ENCODE measurements at regions of chr16 and their contacts with region 1.

Region 1: GRCh38 chr16:55760310-55761001 is 72.4 kb downstream of the CES1 start:
- DNase-seq: peak in 2 of 6 donors; percentile 13 to 17
- ATAC-seq: peak in 2 of 4 donors; percentile 80 to 83
- H3K4me3 ChIP-seq: no peak overlapping the region
- H3K27ac ChIP-seq: no peak overlapping the region
- H3K4me1 ChIP-seq: no peaks in the 10 kb centered on the region
- H3K27me3 ChIP-seq: no peaks in the 10 kb centered on the region
- CTCF ChIP-seq: no peak

Region 2: DNA sequence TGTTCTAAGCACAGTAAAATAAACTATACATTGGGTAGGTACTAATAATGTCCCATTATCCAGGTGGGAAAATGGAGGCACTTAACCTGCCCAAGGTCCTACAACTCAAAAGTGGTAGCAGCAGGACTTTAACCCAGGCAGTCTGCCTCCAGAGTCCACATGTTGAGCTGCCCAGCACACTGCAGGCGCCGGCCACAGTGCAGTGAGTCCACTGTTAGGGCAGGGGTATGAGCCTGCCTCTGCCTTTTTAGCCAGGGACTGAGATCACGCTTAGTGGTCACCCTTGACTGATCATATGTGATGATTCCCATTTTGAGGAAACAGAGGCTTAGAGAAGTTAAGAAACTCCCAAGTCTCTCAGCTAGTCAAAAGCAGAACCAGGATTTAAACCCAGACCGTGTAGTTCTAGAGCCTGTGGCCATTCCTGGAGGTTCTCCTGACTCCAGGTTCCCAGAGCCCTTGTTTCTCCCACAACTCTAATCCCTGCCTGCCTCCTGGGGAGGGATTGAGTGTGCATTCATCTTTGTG is 64.1 kb after region 1 on chr16:
- intact Hi-C with region 1: loop called in 2 of 3 experiments (anchors 2 to 10 kb)
- DNase-seq: no peak
- ATAC-seq: no peak
- H3K4me3 ChIP-seq: no peak overlapping the region
- H3K27ac ChIP-seq: no peak overlapping the region
- H3K4me1 ChIP-seq: no peaks in the 10 kb centered on the region
- H3K27me3 ChIP-seq: no peaks in the 10 kb centered on the region
- CTCF ChIP-seq: no peak

Region 3: DNA sequence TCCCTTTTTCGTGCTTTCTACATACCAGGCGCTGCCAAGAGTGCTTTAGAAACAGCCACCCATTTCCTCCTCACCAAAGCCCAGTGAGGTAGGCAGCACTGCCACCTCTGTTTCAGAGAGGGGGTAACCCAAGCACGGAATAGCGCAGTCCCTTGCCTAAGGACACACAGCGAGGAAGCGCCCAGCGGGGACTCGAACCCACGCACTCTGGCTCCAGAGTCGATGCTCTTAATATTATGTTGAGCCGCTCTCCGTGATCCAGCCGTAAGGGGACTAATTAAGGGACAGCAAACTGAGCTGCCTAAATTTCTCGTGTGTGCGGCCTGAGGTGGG is 71.9 kb after region 1 on chr16:
- intact Hi-C with region 1: loop called in 2 of 3 experiments (anchors 2 to 10 kb)
- DNase-seq: no peak
- ATAC-seq: peak in 1 of 4 donors; percentile 19
- H3K4me3 ChIP-seq: no peak overlapping the region
- H3K27ac ChIP-seq: no peak overlapping the region
- H3K4me1 ChIP-seq: no peaks in the 10 kb centered on the region
- H3K27me3 ChIP-seq: no peaks in the 10 kb centered on the region
- CTCF ChIP-seq: no peak

Region 4: DNA sequence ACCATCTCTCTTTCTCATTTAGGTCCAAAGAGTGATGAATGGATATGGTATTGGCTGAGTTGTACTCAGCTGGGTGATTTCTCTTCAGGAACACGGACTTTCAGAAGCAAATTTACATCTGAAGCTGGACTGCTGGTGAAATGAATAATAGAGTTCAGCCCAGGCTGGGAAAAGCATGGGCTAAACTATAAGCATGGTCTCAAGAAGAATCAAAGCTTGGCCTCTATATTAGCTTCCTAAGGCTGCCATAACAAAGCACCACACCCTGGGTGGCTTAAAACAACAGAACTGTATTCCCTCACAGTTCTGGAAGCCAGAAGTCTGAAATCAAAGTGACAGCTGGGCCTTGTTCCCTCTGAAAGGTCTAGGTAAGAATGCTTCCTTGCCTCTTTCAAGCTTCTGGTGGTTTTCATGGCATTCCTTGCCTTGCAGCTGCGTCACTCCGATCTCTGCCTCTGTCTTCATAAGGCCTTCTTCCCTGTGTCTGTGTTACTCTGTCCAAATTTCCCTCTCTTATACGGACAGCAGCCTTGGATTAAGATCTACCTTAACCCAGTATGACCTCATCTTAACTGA is 204.6 kb after region 1 on chr16:
- intact Hi-C with region 1: no loop called
- DNase-seq: no peak
- ATAC-seq: no peak
- H3K4me3 ChIP-seq: no peak overlapping the region
- H3K27ac ChIP-seq: no peak overlapping the region
- H3K4me1 ChIP-seq: no peaks in the 10 kb centered on the region
- H3K27me3 ChIP-seq: no peaks in the 10 kb centered on the region
- CTCF ChIP-seq: no peak

Region 5: GRCh38 chr16:55981557-55981956 is 221.1 kb after region 1 on chr16:
- intact Hi-C with region 1: no loop called
- DNase-seq: no peak
- ATAC-seq: no peak
- H3K4me3 ChIP-seq: no peak overlapping the region
- H3K27ac ChIP-seq: no peak overlapping the region
- H3K4me1 ChIP-seq: no peaks in the 10 kb centered on the region
- H3K27me3 ChIP-seq: peaks cover 0 to 1% (median 0%) of the 10 kb centered on the region in 4 donors
- CTCF ChIP-seq: no peak